Aorta (tissue), 5 donors: ENCODE measurements at regions of chr11 and their contacts with region 1.

Region 1: DNA sequence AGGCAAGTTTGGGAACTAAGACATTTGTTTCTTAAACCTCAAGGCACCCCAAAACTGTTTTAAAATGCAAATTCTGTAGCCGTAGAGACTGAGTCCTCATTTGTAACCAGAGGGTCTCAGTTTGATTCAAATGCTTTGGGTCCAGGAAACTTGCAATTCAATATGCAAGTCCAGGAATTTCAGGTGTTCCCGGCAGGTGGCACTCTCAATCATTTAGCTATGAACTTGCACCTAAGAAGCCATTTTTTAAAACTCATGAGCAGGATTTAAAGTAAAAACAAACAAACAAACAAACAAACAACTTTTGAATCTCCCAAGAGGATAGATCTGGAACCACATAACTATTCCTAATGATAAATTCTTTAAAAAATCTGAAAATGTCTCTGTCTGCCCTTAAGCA is 8.7 kb upstream of the ABTB2 start:
- DNase-seq: no peak
- ATAC-seq: no peak
- H3K4me3 ChIP-seq: no peak overlapping the region
- H3K27ac ChIP-seq: no peak overlapping the region
- H3K4me1 ChIP-seq: no peaks in the 10 kb centered on the region
- H3K27me3 ChIP-seq: no peaks in the 10 kb centered on the region

Region 2: GRCh38 chr11:33987975-33988580 is 378.4 kb before region 1 on chr11:
- intact Hi-C with region 1: no loop called
- DNase-seq: peak; percentile 81 to 83
- ATAC-seq: peak; percentile 78
- H3K4me3 ChIP-seq: no peak overlapping the region
- H3K27ac ChIP-seq: no peak overlapping the region
- H3K4me1 ChIP-seq: no peaks in the 10 kb centered on the region
- H3K27me3 ChIP-seq: no peaks in the 10 kb centered on the region

Region 3: GRCh38 chr11:34002268-34002807 is 364.2 kb before region 1 on chr11:
- intact Hi-C with region 1: loop called in 1 of 2 experiments (anchors 5 kb)
- DNase-seq: no peak
- ATAC-seq: no peak
- H3K4me3 ChIP-seq: no peak overlapping the region
- H3K27ac ChIP-seq: no peak overlapping the region
- H3K4me1 ChIP-seq: no peaks in the 10 kb centered on the region
- H3K27me3 ChIP-seq: no peaks in the 10 kb centered on the region

Region 4: GRCh38 chr11:34278693-34279297 is 87.7 kb before region 1 on chr11:
- intact Hi-C with region 1: no loop called
- DNase-seq: no peak
- ATAC-seq: no peak
- H3K4me3 ChIP-seq: no peak overlapping the region
- H3K27ac ChIP-seq: no peak overlapping the region
- H3K4me1 ChIP-seq: no peaks in the 10 kb centered on the region
- H3K27me3 ChIP-seq: no peaks in the 10 kb centered on the region

Region 5: DNA sequence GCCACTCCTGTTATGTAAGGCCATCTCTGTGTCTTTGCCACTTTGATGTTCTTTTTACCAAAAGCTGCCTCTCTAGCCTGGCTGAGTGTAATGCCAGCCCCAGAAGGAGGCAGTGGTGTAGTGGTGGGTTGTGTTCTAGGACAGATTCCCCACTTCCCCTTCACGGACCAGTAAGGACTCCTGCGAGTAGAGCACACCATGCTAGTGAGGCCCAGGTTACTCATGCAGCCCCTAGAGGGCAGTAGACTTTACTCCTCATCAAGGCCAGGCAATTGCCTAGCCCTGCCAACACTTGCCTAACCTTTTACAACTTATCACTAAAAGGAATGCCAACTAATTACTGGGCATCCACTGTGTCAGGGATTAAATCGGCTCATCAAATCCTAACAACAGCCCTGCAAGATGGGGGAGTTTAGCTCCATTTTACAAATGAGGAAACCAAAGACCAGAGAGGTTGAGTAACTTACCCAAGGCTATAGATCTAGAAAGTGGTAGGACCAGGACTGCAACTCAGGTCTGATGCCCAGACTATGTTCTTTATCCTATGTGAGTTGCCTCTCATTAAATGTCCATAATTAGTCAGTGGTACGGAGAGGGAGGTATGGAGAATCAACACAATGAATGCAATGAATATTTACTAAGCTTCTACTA is 474.3 kb after region 1 on chr11:
- intact Hi-C with region 1: no loop called
- DNase-seq: peak in 1 of 2 donors; percentile 48
- ATAC-seq: no peak
- H3K4me3 ChIP-seq: no peak overlapping the region
- H3K27ac ChIP-seq: no peak overlapping the region
- H3K4me1 ChIP-seq: no peaks in the 10 kb centered on the region
- H3K27me3 ChIP-seq: peaks cover 0 to 5% of the 10 kb centered on the region in 2 donors